Caco-2 (cell line): ENCODE measurements at regions of chr11 and their contacts with region 1.

Region 1: DNA sequence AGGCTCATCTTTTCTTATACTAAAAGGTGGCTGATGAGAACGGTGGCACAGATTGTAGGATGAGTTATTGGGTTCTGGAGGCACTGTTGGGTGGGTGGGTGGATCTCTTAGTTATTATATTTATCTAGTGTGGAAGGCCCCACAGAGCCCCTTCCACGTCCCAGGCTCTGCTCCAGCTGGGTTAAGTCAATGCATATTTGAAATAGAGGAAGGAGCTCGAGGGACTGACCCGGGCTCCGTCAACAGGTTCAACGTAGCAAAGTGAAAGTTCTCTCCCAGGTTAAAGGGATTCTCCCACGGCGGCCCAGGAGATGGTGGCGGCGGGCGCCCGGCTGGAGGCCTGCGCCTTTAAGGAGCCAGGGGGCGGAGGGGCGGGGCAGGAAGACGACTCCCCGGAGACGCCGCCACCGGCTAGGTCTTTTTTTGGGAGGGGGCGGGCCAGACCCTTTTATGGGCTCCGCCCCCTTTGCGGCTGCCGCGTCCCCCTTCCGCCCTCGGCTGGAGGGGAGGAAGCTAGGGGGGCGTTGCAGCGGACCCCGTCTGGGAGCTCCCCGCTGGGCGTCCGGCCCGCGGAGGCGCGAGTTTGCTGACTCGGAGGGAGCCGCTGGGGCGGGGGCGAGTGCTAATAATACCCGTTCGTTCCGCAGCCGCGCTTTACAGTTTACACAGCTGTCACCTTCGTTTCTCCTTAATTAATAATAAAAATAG is 1.5 kb upstream of the INPPL1 start:
- DNase-seq: peak; percentile 98 to 99
- H3K4me3 ChIP-seq: peak overlapping the region; percentile 79
- H3K4me3 Mint-ChIP-seq: peak overlapping the region; percentile 99
- H3K27ac Mint-ChIP-seq: peak overlapping the region; percentile 72
- H3K4me1 ChIP-seq: peaks cover 28% of the 10 kb centered on the region
- H3K4me1 Mint-ChIP-seq: peaks cover 19% of the 10 kb centered on the region
- H3K27me3 ChIP-seq: no peaks in the 10 kb centered on the region
- H3K27me3 Mint-ChIP-seq: no peaks in the 10 kb centered on the region
- CTCF ChIP-seq: peak in 1 of 2 experiments; percentile 51

Region 2: DNA sequence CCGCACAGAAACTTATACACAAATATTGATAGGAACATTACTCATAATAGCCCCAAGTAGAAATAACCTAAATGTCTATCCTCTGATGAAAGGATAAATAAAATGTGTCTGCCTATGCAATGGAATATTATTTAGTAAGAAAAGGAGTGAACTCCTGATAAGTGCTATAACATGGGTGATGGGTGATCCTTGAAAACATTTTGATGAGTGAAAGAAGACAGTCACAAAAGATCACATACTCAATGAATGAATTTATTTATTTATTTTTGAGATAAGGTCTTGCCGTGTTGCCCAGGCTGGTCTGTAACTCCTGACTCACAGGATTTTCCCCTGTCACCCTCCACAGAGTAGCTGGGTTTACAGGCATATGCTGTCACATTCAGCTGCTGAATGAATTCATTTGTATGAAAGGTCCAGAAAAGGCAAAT is 276.9 kb before region 1 on chr11:
- CTCF ChIA-PET with region 1: no interaction called
- POLR2A ChIA-PET with region 1: no interaction called
- intact Hi-C with region 1: loop called (anchors 5 kb)
- DNase-seq: no peak
- H3K4me3 ChIP-seq: no peak overlapping the region
- H3K4me3 Mint-ChIP-seq: peak overlapping the region; percentile 37
- H3K27ac Mint-ChIP-seq: peak overlapping the region; percentile 94
- H3K4me1 ChIP-seq: peaks cover 69% of the 10 kb centered on the region
- H3K4me1 Mint-ChIP-seq: peaks cover 42% of the 10 kb centered on the region
- H3K27me3 ChIP-seq: no peaks in the 10 kb centered on the region
- H3K27me3 Mint-ChIP-seq: no peaks in the 10 kb centered on the region
- CTCF ChIP-seq: no peak

Region 3: DNA sequence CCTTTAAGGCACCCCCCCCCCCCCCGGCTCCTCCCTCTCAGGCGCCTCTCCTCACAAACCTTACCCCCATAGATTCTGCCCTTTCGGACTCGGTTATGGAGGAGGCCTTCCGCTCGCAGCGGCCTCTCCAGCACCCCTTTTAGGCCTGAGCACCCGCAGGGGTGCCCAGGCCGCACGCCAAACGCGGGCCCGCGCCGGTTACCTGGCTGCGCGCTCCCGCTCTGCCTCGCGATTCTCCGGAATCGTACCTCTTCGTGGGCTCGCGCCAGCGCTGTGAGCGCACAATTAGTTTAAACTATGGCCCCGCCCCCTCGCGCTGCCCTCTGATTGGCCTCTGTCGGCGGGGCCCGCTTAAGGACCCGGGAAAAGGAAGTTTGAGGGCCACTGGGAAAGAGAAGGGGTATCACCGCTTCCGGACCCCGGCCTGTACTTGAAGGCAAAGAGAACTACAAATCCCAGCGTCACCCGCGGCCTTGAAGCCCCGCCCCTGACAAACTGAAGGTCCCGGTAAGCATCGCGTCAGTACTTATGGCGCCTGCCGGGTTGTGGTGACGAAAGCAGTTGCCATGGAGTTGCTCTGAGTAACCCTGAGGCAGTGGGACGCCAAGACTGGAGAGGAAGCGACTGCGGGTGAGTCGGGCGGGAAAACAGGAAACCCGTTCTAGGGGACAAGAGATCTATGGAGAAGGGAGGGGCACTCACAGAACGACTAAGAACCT is 142.6 kb before region 1 on chr11 and contains the starts of genes LRRC51 and NUMA1:
- CTCF ChIA-PET with region 1: no interaction called
- POLR2A ChIA-PET with region 1: no interaction called
- intact Hi-C with region 1: loop called (anchors 1 kb)
- DNase-seq: peak; percentile 100
- H3K4me3 ChIP-seq: peak within 1 kb of the TSS; percentile 92
- H3K4me3 Mint-ChIP-seq: peak within 1 kb of the TSS; percentile 86
- H3K27ac Mint-ChIP-seq: peak within 1 kb of the TSS; percentile 99
- H3K4me1 ChIP-seq: peaks cover 19% of the 10 kb centered on the region
- H3K4me1 Mint-ChIP-seq: peaks cover 28% of the 10 kb centered on the region
- H3K27me3 ChIP-seq: no peaks in the 10 kb centered on the region
- H3K27me3 Mint-ChIP-seq: no peaks in the 10 kb centered on the region
- CTCF ChIP-seq: no peak
- total RNA-seq, gene LRRC51: 13.7 and 13.8 TPM in 2 replicates
- total RNA-seq, gene NUMA1: 182 and 190 TPM in 2 replicates

Region 4: DNA sequence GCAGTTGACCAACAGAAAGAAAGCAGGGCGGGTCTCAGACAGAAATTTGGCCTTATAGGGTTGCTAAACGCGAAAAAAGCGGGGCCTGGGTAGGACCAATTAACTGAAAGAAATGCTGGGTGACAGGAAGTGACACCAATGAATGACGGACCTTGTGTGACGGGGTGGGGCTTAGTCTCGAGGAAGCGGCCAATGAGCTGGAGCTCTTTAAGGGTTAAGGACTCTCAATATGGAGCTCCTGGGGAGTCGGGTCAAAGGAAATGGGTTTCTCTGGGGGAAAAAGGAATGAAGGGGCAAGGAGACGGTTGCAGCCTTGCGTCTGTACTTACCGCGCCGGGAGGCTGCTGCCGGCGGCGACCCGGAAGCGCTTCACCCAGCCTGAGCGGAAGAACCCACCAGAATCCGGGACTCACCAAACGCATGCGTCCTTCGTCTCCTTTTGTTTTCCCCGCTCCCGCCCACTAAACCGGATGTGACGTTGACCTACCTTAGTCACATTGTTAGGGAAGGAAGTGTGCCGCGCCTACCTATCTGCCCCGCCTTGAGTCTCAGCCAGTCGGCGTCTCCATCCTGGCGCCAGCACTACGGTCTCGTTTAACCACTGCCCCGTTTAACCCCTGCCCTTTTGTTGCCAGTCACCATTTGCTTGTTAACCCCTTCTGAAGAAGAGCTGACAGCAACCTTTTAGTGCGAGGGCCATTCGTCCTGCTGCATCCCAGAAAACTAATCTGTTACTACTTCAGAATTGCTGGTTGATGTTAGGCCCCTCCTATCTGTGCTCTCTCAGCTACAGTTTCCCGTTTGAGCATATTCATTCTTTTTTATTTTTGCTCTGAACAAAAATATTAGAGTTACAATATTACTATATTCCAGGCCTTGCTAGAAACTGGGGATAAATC is 110.5 kb before region 1 on chr11 and contains the start of gene ANAPC15:
- CTCF ChIA-PET with region 1: interaction called, 4 read pairs
- POLR2A ChIA-PET with region 1: interaction called, 12 read pairs
- intact Hi-C with region 1: loop called (anchors 1 kb)
- DNase-seq: peak; percentile 99 to 100
- H3K4me3 ChIP-seq: peak within 1 kb of the TSS; percentile 52
- H3K4me3 Mint-ChIP-seq: peak within 1 kb of the TSS; percentile 94
- H3K27ac Mint-ChIP-seq: peak within 1 kb of the TSS; percentile 100
- H3K4me1 ChIP-seq: peaks cover 9% of the 10 kb centered on the region
- H3K4me1 Mint-ChIP-seq: no peaks in the 10 kb centered on the region
- H3K27me3 ChIP-seq: no peaks in the 10 kb centered on the region
- H3K27me3 Mint-ChIP-seq: no peaks in the 10 kb centered on the region
- CTCF ChIP-seq: no peak
- total RNA-seq, gene ANAPC15: 98.6 and 105 TPM in 2 replicates

Region 5: GRCh38 chr11:72203163-72203562 is 19.9 kb before region 1 on chr11:
- CTCF ChIA-PET with region 1: no interaction called
- POLR2A ChIA-PET with region 1: interaction called, 3 read pairs
- intact Hi-C with region 1: loop called (anchors 2 kb)
- DNase-seq: peak in 1 of 2 experiments; percentile 3
- H3K4me3 ChIP-seq: no peak overlapping the region
- H3K4me3 Mint-ChIP-seq: no peak overlapping the region
- H3K27ac Mint-ChIP-seq: no peak overlapping the region
- H3K4me1 ChIP-seq: peaks cover 5% of the 10 kb centered on the region; the same call in 1 of the 2 replicates
- H3K4me1 Mint-ChIP-seq: peaks cover 10% of the 10 kb centered on the region
- H3K27me3 ChIP-seq: no peaks in the 10 kb centered on the region
- H3K27me3 Mint-ChIP-seq: no peaks in the 10 kb centered on the region
- CTCF ChIP-seq: no peak